Activated B cell treated with CpG ODN at 0.5 μM for 24 hours (primary cell): ENCODE measurements at regions of chr3 and their contacts with region 1.

Region 1: DNA sequence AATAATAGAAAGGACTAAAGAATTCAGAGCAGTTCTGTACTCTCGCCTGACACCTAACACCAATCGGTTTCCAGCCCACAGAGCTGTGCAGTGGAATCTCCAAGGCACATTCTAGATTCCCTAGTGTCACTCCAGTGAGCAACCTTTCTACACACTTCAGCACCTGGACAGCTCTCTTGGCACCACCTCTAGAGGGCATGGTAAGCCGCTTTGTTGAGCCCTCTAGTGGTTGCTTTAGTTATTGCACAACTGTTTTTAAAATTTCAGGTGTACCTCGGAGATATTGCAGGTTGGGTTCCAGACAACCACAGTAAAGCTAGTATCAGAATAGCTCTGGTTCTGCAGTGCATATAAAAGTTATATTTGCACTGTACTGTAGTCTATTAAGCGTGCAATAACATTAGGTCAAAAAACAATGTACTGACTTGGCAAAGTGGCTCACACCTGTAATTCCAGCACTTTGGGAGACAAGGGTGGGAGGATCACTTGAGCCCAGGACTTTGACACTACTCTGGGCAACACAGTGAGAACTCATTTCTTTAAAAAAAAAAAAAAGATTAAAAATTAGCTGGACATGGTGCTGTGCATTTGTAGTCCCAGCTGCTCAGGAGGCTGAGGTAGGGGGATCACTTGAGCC is 26.5 kb upstream of the ERC2 start:
- DNase-seq: no peak
- ATAC-seq: peak; percentile 84
- H3K4me3 Mint-ChIP-seq: no peak overlapping the region
- H3K27ac Mint-ChIP-seq: no peak overlapping the region
- H3K4me1 Mint-ChIP-seq: no peaks in the 10 kb centered on the region
- H3K27me3 Mint-ChIP-seq: peaks cover 17% of the 10 kb centered on the region
- CTCF ChIP-seq: peak; percentile 77

Region 2: DNA sequence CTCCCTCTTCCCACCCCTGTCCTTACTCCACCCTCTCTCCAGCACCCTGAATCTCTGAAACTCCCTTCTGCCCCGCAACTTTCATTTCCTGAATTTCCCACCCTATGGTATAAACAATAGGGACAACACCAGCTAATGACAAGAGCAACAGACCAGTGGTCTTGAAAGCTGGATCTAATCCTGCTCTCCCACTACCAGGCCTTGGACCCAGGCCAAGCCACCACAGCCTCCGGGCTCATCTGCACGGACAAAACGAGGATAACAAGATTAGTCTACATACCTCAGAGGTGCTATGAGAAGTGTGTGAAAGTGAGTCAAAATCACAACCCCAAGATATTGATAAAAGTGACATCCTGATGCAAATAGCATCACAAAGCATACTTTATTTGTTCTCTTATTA is 155.1 kb before region 1 on chr3:
- CTCF ChIA-PET with region 1: interaction called, 4 read pairs
- POLR2A ChIA-PET with region 1: no interaction called
- intact Hi-C with region 1: loop called (anchors 2 kb)
- DNase-seq: no peak
- ATAC-seq: no peak
- H3K4me3 Mint-ChIP-seq: no peak overlapping the region
- H3K27ac Mint-ChIP-seq: no peak overlapping the region
- H3K4me1 Mint-ChIP-seq: no peaks in the 10 kb centered on the region
- H3K27me3 Mint-ChIP-seq: peaks cover 11% of the 10 kb centered on the region
- CTCF ChIP-seq: no peak